Activated CD8-positive, alpha-beta T cell treated with anti-CD3 and anti-CD28 coated beads for 36 hours (primary cell): ENCODE measurements at regions of chr6 and their contacts with region 1.

Region 1: DNA sequence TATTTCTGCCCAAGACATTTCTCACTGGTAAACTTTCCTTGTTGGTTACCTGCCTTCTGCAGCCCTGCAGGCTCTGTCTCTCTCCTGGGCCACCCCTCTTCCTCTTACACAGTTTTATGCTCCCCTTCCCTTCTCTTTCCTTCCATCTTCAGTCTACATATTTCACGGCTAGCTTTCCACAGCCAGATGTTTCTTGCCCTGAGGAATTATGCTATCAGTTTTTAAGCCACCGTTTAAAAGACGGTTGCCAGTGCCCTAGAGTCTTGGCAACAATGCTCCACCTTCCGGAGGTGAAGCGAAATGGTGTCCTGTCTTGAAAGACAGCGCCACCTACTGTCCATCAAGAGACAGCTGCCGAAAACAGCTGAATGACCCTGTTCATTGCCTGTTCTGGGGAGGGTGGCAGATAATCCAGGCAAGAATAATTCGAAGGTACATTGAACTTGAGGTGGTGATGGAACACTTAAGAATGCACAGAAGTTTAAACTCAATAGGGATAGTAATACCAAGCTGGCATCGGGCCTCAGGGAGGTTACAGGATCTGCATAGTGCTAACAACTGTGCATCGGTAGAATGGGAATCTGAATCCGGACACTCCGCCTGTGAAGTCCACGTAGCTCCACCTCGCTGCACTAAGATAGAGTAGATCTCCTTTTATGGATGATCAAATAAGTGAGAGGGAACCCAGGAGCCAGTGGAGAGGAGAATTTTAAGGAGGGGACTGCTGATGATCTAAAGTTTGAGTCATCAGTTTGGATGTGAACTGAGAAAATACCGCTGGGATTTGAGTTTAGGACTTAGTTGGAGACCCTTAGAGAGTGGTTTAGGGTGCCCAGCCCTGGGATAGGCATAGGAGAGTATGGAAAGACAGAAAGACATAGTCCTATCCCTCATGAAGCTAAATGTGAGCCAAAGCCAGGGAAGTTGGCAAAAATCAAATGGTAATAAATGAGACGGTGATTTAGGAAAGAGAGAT is 4.8 kb upstream of the TRIM40 start:
- DNase-seq: peak; percentile 76
- ATAC-seq: peak; percentile 94
- H3K4me3 Mint-ChIP-seq: no peak overlapping the region
- H3K27ac Mint-ChIP-seq: no peak overlapping the region
- H3K4me1 Mint-ChIP-seq: peaks cover 12% of the 10 kb centered on the region
- H3K27me3 Mint-ChIP-seq: peaks cover 66% of the 10 kb centered on the region
- CTCF ChIP-seq: peak; percentile 99

Region 2: DNA sequence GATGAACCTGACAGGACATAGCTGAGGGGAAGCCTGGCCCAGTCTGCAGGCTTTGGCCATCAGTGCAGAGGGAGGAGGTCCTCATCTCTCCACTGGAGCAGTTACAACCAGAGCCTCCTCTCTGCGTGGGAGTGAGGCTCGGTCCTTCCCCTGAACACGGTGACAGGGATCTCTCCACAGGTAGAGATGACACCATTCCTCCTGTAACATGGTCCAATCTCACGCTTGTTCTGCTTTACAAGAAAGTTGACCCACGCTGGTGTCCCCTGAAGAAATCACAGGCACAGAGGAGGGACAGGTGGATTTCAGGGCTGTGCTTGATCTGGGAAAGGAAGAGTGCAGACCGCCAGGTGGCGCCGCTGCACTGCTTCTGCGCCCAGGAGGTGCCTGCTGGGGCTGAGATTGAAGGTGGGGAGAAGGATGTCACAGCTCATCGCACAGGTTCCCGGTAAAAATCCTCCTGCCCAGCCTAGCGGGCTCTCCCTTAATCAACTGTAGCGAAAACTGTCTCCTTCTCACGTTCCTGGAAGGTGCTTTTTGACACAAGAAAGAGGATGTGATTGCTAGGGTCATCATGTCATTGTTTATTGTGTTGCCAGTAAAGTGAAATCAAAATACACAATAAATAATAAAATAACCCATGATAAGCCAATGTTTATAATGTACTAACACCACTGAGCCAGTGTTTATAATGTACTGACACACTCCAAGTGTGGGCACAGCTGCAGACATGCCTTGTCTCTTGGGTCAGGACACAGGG is 283.1 kb before region 1 on chr6:
- CTCF ChIA-PET with region 1: interaction called, 24 read pairs
- POLR2A ChIA-PET with region 1: no interaction called
- intact Hi-C with region 1: no loop called
- DNase-seq: peak; percentile 90
- ATAC-seq: peak; percentile 78
- H3K4me3 Mint-ChIP-seq: no peak overlapping the region
- H3K27ac Mint-ChIP-seq: no peak overlapping the region
- H3K4me1 Mint-ChIP-seq: peaks cover 29% of the 10 kb centered on the region
- H3K27me3 Mint-ChIP-seq: peaks cover 46% of the 10 kb centered on the region
- CTCF ChIP-seq: peak; percentile 99

Region 3: DNA sequence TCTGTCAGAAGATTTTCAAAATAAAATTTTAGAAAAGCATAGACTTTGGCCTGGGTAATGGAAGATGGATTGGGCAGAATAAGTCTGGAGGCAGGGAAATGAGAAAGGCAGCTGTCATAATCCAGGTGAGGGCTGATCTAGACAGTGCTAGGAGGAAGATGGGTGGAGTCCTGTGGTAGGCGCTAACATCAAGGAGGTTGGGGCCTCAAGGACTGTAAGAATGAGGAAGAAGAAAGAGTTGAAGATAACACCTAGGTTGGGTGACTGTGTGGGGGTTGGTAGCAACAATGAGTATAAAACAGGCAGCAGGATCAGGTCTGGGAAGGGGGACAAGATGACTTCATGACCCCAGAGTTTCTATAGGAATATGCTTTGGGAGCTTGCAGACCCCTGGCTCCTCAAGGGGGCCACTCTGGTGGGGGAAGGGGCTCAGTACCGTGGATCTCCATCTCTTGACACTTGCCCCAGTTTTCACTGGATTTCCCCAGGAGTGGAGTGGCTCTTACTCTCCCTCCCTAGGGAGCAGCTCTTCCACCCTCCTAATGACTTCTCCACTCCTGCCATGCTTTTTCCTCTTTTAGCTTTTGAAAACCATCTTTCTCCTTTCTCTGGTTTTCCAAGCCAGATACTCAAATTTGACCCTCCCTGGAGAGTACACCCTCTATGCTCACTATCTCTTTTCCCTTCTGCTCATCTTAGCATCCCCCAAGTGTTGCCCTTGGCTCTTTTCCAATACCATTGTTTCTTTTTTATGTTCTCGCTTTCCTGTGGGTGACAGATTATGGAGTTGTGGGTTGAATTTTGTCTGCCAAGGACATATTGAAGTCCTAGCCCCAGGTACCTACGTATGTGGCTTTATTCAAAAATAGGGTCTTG is 33.0 kb before region 1 on chr6:
- CTCF ChIA-PET with region 1: interaction called, 324 read pairs
- POLR2A ChIA-PET with region 1: interaction called, 16 read pairs
- intact Hi-C with region 1: loop called (anchors 1 kb)
- DNase-seq: peak; percentile 17
- ATAC-seq: no peak
- H3K4me3 Mint-ChIP-seq: no peak overlapping the region
- H3K27ac Mint-ChIP-seq: no peak overlapping the region
- H3K4me1 Mint-ChIP-seq: peaks cover 35% of the 10 kb centered on the region
- H3K27me3 Mint-ChIP-seq: peaks cover 51% of the 10 kb centered on the region
- CTCF ChIP-seq: no peak

Region 4: GRCh38 chr6:30113003-30113759 is 18.0 kb before region 1 on chr6 and contains the start of gene TRIM31:
- CTCF ChIA-PET with region 1: interaction called, 324 read pairs
- POLR2A ChIA-PET with region 1: interaction called, 3 read pairs
- intact Hi-C with region 1: no loop called
- DNase-seq: peak; percentile 52
- ATAC-seq: peak; percentile 87
- H3K4me3 Mint-ChIP-seq: no peak within 1 kb of the TSS
- H3K27ac Mint-ChIP-seq: no peak within 1 kb of the TSS
- H3K4me1 Mint-ChIP-seq: peaks cover 13% of the 10 kb centered on the region
- H3K27me3 Mint-ChIP-seq: peaks cover 39% of the 10 kb centered on the region
- CTCF ChIP-seq: no peak
- total RNA-seq, gene TRIM31: not detected

Region 5: GRCh38 chr6:30154709-30155519 is 23.7 kb after region 1 on chr6:
- CTCF ChIA-PET with region 1: interaction called, 12 read pairs
- POLR2A ChIA-PET with region 1: no interaction called
- intact Hi-C with region 1: no loop called
- DNase-seq: no peak
- ATAC-seq: no peak
- H3K4me3 Mint-ChIP-seq: no peak overlapping the region
- H3K27ac Mint-ChIP-seq: no peak overlapping the region
- H3K4me1 Mint-ChIP-seq: peaks cover 12% of the 10 kb centered on the region
- H3K27me3 Mint-ChIP-seq: peaks cover 29% of the 10 kb centered on the region
- CTCF ChIP-seq: no peak

Region 6: DNA sequence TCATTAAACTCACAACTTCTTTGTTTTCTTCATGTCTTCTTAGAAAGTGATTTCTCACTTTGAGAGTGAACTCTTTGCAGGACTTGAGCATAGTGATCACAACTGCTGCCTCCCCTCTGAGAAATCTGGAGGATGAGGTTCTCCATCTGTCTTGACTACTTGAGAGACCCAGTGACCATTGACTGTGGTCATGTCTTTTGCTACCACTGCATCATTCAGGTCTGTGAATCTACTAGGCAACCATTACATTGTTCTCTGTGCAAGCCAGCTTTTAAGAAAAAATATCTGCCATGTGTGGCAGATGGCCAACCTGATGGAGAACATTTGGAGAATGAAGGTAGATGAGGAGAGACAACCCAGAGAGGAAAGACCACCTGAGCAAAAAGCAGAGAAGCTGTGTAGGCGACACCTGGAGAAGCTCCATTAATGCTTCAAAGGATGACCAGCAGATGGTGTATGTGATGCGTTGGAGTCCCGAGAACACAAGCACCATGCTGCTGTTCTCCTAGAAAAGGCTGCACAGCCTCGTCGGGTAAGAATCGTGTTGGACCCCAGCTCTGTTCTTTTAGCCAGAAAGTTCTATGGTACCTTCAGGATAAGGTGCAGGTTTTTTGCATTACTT is 107.1 kb after region 1 on chr6:
- CTCF ChIA-PET with region 1: no interaction called
- POLR2A ChIA-PET with region 1: no interaction called
- intact Hi-C with region 1: no loop called
- DNase-seq: peak; percentile 39
- ATAC-seq: peak; percentile 70
- H3K4me3 Mint-ChIP-seq: no peak overlapping the region
- H3K27ac Mint-ChIP-seq: no peak overlapping the region
- H3K4me1 Mint-ChIP-seq: no peaks in the 10 kb centered on the region
- H3K27me3 Mint-ChIP-seq: peaks cover 20% of the 10 kb centered on the region
- CTCF ChIP-seq: peak; percentile 44